ENCODE measurements at regions of chr15 and their contacts with region 1.

Region 1: DNA sequence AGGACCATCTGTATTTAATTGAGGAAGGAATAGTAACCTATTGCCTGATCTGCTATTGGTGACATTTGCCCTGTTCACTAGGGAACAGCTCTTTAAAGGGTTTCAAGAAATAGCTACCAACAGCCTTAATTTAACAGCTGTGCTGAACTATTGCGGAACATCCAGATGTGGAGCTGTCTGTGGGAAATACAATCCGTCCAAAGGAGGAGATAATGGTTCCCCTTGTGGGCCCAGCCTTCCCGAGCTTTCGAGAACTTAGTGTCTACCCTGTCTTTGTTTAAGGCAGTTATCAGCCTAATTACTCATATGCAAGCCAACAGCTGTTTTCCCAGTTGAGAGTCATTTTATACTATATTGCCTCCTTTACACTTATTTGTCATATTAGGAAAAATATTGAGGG is 398.6 kb downstream of the WDR72 start:
- DNase-seq: no peak
- H3K4me3 ChIP-seq: no peak overlapping the region
- H3K27ac ChIP-seq: no peak overlapping the region
- H3K4me1 ChIP-seq: no peaks in the 10 kb centered on the region
- H3K27me3 ChIP-seq: no peaks in the 10 kb centered on the region
- CTCF ChIP-seq: no peak
- POLR2A ChIP-seq: no peak

Region 2: DNA sequence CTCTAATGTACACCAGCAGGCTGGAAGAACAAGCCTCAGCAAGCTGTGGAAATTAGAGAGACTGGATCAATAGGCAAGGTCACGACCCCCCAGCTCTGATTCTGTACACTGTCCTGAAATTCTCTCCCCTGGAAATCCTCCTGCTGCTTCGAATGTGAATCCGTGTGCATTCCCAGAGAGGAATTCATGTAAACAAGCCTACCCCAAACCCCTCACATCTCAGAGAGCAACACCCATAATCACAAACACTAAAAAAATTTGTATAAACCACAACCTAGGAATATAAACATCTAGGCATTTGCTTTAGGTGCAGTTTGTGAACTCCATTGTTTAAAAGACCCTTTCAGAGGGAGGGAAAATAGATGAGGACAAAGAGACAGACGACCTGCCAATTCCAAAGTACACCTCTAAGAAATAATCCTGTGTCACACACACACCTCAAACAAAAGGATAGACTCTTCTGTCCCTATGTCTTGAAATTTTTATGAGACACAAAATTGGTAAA is 73.3 kb after region 1 on chr15:
- intact Hi-C with region 1: loop called (anchors 10 kb)
- DNase-seq: no peak
- H3K4me3 ChIP-seq: no peak overlapping the region
- H3K27ac ChIP-seq: no peak overlapping the region
- H3K4me1 ChIP-seq: no peaks in the 10 kb centered on the region
- H3K27me3 ChIP-seq: no peaks in the 10 kb centered on the region
- CTCF ChIP-seq: no peak
- POLR2A ChIP-seq: no peak